ENCODE measurements at regions of chr12 and their contacts with region 1.

Region 1: DNA sequence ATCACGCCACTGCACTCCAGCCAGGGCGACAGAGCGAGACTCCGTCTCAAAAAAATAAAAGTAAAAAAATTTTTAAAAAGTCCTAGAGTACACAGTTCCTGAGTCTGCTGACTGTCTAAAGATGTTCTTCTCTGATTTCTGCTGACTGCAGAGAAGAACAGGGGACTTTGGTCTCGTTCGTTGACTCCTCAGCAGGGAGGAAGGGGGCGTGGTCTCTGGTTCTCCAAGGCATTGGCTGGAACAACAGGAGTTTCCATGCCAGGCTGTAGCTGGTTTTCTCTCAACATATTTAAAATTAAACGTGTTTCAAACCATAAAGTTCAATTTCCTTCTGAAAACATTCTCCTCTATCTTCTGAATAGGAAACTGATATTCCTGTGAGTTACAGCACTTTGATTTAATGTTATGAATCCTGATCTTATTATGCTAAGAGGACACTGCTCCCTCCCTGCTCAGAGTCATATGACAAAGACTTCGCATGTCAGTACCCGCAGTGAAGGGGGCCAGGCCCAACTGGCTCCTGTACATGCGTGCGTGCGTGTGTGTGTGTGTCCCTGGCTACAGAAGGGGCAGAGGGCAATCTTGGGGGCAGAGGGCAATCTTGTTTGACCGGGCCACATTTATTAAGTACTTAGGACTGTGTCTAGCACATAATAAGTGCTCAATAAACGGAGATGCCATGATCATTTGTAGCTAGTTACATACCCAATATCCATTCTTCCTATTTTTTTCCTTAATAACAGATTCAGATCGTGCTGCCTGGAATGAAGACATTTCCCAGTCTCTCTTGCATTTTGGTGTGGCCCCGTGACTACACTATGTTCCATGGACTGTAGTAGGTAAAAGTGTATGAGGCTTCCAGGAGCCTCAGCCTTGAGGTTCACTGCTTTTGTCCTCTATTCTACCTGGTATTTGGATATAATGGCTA is 16.5 kb upstream of the HNF1A start:
- DNase-seq: no peak
- H3K4me3 ChIP-seq: no peak overlapping the region
- H3K27ac ChIP-seq: peak overlapping the region; percentile 71 to 89 (median 82)
- H3K4me1 ChIP-seq: peaks cover 8 to 67% (median 22%) of the 10 kb centered on the region in 3 donors
- H3K27me3 ChIP-seq: no peaks in the 10 kb centered on the region
- CTCF ChIP-seq: no peak
- POLR2A ChIP-seq: no peak

Region 2: DNA sequence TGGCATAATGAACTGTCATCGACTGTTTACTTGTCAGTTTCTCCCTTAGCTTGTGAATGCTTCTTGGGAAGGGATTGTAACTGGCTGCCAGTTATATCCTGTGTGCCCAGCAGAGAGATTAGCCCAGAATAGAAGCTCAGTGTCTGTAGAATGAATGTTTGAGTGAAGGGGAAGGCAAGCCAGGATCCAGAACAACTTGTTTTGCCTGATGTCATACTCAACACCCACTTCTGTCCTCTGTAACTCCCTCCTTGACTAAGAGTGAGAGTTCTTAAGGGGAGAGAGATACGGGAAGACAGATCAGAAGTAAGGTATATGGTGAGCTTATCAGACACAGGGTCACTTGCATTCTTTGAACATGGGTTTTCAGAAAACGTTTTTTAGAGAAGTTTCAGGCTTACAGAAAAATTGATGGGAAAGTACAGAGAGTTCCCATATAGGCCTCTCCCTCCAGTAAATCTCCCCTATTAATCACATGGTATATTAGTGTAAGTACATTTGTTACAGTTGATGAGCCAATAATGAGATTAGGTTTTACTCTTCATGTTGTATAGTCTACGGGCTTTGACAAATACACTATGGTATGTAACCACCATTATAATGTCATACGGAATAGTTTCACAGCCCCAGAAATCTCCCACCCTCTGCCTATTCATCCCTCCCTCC is 52.1 kb before region 1 on chr12:
- intact Hi-C with region 1: loop called (anchors 5 kb)
- DNase-seq: no peak
- H3K4me3 ChIP-seq: no peak overlapping the region
- H3K27ac ChIP-seq: peak overlapping the region; percentile 67 to 99 (median 94)
- H3K4me1 ChIP-seq: peaks cover 17 to 93% (median 29%) of the 10 kb centered on the region in 3 donors
- H3K27me3 ChIP-seq: no peaks in the 10 kb centered on the region
- CTCF ChIP-seq: no peak
- POLR2A ChIP-seq: no peak

Region 3: GRCh38 chr12:121026274-121027045 is 64.6 kb after region 1 on chr12:
- intact Hi-C with region 1: no loop called
- DNase-seq: no peak
- H3K4me3 ChIP-seq: no peak overlapping the region
- H3K27ac ChIP-seq: peak overlapping the region in 1 of 4 donors; percentile 13
- H3K4me1 ChIP-seq: no peaks in the 10 kb centered on the region
- H3K27me3 ChIP-seq: no peaks in the 10 kb centered on the region
- CTCF ChIP-seq: peak in 1 of 6 experiments; percentile 23
- POLR2A ChIP-seq: no peak

Measured in esophagus squamous epithelium (tissue), 5 donors.